Psoas muscle (tissue), 8 donors: ENCODE measurements at regions of chr22 and their contacts with region 1.

Region 1: DNA sequence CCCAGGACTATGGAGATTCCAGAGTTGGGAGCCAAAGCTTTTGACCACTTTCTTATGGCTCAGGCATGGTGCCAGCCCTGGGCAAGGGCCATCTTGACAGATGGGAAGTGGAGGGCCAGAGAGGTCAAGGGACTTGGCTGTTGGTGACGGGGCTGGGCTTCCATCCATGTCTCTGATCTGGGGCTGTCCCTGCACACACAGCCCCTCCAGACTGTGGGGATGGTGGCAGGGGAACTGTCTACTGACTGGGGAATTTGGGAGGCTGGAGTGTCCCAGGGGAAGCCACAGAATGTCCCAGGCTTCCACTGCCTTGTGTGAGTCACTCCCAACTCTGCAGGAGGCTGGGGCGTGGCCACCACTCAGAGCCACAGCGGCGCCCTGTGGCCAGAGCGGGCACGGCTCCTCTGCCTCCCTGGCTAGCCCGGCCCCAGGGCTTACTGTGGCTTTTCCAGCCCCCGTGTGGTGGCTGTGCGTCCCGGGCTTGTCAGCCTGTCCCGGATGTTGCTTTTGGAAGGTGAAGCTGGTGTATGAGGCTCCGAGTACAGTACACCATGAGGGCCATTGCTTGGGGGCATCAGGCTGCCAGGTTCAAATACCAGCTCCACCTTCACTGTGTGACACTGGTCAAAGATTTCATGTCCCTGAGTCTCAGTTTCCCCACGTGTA is 19.6 kb downstream of the C22orf23 start:
- DNase-seq: peak; percentile 91 to 96
- ATAC-seq: peak; percentile 98 to 99 (median 98)
- H3K4me3 ChIP-seq: no peak overlapping the region
- H3K27ac ChIP-seq: peak overlapping the region; percentile 54
- H3K4me1 ChIP-seq: peaks cover 11% of the 10 kb centered on the region
- H3K27me3 ChIP-seq: no peaks in the 10 kb centered on the region
- CTCF ChIP-seq: peak; percentile 92

Region 2: DNA sequence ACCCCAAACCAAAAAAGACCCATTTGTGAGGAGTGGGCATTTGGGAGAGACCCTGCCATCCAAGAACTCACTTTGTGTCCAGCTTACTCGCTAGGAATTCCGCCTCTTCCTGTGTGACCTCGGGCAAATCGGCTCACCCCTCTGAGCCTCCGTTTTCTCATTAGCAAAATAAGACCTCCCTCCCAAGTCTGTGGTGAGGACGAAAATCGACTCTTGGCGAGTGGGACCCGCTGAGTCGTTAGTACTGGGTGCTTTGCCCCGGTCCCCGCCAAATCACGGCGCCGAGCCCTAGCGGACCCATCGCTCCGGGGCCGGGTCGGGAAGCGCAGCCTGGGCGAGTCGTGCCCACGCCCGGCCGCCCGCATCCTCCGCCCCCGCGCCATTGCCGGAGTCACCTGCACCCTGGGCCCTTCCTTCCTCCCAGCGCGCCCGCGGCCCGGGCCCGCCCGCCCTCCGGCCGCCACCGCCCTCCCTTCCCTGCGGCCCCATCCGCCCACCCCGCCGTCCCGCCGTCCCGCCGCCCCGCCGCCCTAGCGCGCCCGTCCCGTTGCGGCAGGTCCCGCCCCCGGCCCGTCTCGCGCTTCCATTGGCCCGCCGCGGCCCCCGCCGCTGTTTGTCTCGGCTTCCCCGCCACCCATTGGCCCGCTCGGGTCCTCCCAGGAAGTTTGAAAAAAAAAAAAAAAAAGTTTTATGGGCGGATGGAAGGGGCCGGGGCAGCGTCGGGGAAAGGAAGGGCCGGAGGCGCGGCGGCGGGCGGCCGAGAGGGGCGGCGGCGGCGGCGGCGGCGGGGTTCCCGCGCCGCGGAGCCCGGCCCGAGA is 188.1 kb before region 1 on chr22:
- intact Hi-C with region 1: no loop called
- DNase-seq: peak; percentile 93 to 94
- ATAC-seq: peak; percentile 80 to 91 (median 86)
- H3K4me3 ChIP-seq: peak overlapping the region; percentile 79
- H3K27ac ChIP-seq: peak overlapping the region; percentile 82
- H3K4me1 ChIP-seq: peaks cover 29% of the 10 kb centered on the region
- H3K27me3 ChIP-seq: no peaks in the 10 kb centered on the region
- CTCF ChIP-seq: no peak

Region 3: GRCh38 chr22:37817705-37818408 is 116.0 kb before region 1 on chr22:
- intact Hi-C with region 1: loop called in 1 of 2 experiments (anchors 10 kb)
- DNase-seq: peak; percentile 86 to 91
- ATAC-seq: peak; percentile 90 to 97 (median 94)
- H3K4me3 ChIP-seq: peak overlapping the region; percentile 60
- H3K27ac ChIP-seq: no peak overlapping the region
- H3K4me1 ChIP-seq: peaks cover 13% of the 10 kb centered on the region
- H3K27me3 ChIP-seq: no peaks in the 10 kb centered on the region
- CTCF ChIP-seq: peak; percentile 98

Region 4: GRCh38 chr22:37892566-37893335 is 41.1 kb before region 1 on chr22:
- intact Hi-C with region 1: loop called in 1 of 2 experiments (anchors 5 kb)
- DNase-seq: no peak
- ATAC-seq: peak in 2 of 4 donors; percentile 37 to 44
- H3K4me3 ChIP-seq: no peak overlapping the region
- H3K27ac ChIP-seq: no peak overlapping the region
- H3K4me1 ChIP-seq: peaks cover 8% of the 10 kb centered on the region
- H3K27me3 ChIP-seq: no peaks in the 10 kb centered on the region
- CTCF ChIP-seq: no peak

Region 5: GRCh38 chr22:37905534-37906363 is 28.1 kb before region 1 on chr22 and contains the start of gene MICALL1:
- intact Hi-C with region 1: loop called in 1 of 2 experiments (anchors 2 kb)
- DNase-seq: peak; percentile 78 to 83
- ATAC-seq: peak; percentile 82 to 89 (median 84)
- H3K4me3 ChIP-seq: peak within 1 kb of the TSS; percentile 71
- H3K27ac ChIP-seq: peak within 1 kb of the TSS; percentile 81
- H3K4me1 ChIP-seq: peaks cover 17% of the 10 kb centered on the region
- H3K27me3 ChIP-seq: no peaks in the 10 kb centered on the region
- CTCF ChIP-seq: peak; percentile 35
- total RNA-seq, gene MICALL1: 16.4 to 24.7 (median 18.9) TPM